AG04450 (cell line): ENCODE measurements at regions of chr11 and their contacts with region 1.

Region 1: GRCh38 chr11:75406338-75406777 is 7.0 kb downstream of the RPS3 start:
- DNase-seq: no peak
- H3K4me3 ChIP-seq: no peak overlapping the region
- H3K27ac ChIP-seq: no peak overlapping the region
- H3K27me3 ChIP-seq: no peaks in the 10 kb centered on the region
- CTCF ChIP-seq: no peak

Region 2: GRCh38 chr11:75394085-75394840 is 12.1 kb before region 1 on chr11:
- CTCF ChIA-PET with region 1: interaction called, 11 read pairs
- POLR2A ChIA-PET with region 1: no interaction called
- DNase-seq: no peak
- H3K4me3 ChIP-seq: no peak overlapping the region
- H3K27ac ChIP-seq: no peak overlapping the region
- H3K27me3 ChIP-seq: peaks cover 16% of the 10 kb centered on the region
- CTCF ChIP-seq: no peak

Region 3: GRCh38 chr11:75421035-75421602 is 14.8 kb after region 1 on chr11:
- CTCF ChIA-PET with region 1: interaction called, 48 read pairs
- POLR2A ChIA-PET with region 1: interaction called, 4 read pairs
- DNase-seq: no peak
- H3K4me3 ChIP-seq: no peak overlapping the region
- H3K27ac ChIP-seq: no peak overlapping the region
- H3K27me3 ChIP-seq: no peaks in the 10 kb centered on the region
- CTCF ChIP-seq: no peak

Region 4: GRCh38 chr11:75532200-75533048 is 126.1 kb after region 1 on chr11:
- CTCF ChIA-PET with region 1: interaction called, 14 read pairs
- POLR2A ChIA-PET with region 1: no interaction called
- DNase-seq: no peak
- H3K4me3 ChIP-seq: no peak overlapping the region
- H3K27ac ChIP-seq: no peak overlapping the region
- H3K27me3 ChIP-seq: peaks cover 17% of the 10 kb centered on the region
- CTCF ChIP-seq: peak; percentile 89